ENCODE measurements at regions of chr7 and their contacts with region 1.

Region 1: DNA sequence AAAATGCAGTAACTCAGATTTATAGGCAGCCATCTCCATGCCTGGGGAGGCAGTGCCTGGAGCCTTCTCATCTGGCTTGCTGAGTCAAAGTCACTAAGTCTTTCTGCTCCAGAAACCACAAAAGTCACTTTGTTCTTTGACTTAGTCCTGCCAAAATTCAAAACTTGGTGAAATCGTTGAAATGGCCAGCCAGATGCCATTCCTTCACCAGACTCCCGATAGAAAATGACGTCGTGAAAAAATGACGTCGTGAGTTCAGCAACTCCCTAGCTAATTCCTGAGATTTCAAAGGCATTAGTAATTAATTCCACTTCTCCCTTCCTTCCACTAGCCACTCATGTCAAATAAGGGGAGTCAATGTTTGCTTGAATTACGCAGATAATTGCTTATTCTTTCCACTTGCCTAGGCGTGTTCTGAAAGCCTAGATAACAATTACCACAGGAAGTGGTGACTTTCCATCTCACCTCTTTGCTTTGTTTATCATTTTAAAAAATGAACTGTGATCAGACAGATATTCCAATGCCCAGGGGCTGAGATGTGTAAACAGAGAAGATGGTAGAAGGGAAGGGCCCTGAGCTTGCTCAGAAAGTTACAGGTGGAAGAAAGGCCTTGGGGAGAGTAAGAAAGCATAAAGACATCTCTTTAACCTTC is 48.5 kb upstream of the OSBPL3 start:
- DNase-seq: peak; percentile 13
- H3K4me3 Mint-ChIP-seq: peak overlapping the region; percentile 12
- H3K27ac Mint-ChIP-seq: peak overlapping the region; percentile 93
- H3K4me1 Mint-ChIP-seq: peaks cover 40% of the 10 kb centered on the region
- H3K27me3 Mint-ChIP-seq: peaks cover 12% of the 10 kb centered on the region

Region 2: DNA sequence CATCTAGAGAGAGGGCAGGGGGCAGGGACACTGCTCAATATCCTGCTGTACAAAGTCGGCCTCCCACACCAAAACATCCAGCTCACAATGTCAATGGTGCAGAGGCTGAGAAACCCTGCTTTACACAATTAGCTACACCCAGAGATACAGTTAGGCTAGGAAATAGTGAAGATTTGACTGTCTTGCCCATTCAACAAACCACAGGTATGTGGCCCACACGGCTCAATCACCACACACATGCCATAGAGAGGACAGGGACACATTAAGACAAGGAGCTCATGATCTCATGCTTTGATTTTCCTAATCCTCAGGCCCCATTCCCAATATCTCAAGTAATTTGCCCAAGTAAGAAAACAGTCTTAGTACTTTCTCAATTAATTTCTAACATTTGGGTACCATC is 158.9 kb before region 1 on chr7:
- intact Hi-C with region 1: loop called (anchors 1 kb)
- DNase-seq: no peak
- H3K4me3 Mint-ChIP-seq: no peak overlapping the region
- H3K27ac Mint-ChIP-seq: peak overlapping the region; percentile 13
- H3K4me1 Mint-ChIP-seq: peaks cover 49% of the 10 kb centered on the region
- H3K27me3 Mint-ChIP-seq: no peaks in the 10 kb centered on the region

Region 3: GRCh38 chr7:25069900-25070443 is 41.5 kb after region 1 on chr7:
- intact Hi-C with region 1: loop called (anchors 2 kb)
- DNase-seq: peak; percentile 16
- H3K4me3 Mint-ChIP-seq: no peak overlapping the region
- H3K27ac Mint-ChIP-seq: no peak overlapping the region
- H3K4me1 Mint-ChIP-seq: peaks cover 27% of the 10 kb centered on the region
- H3K27me3 Mint-ChIP-seq: peaks cover 2% of the 10 kb centered on the region